Endothelial cell of umbilical vein (primary cell): ENCODE measurements at regions of chr3 and their contacts with region 1.

Region 1: DNA sequence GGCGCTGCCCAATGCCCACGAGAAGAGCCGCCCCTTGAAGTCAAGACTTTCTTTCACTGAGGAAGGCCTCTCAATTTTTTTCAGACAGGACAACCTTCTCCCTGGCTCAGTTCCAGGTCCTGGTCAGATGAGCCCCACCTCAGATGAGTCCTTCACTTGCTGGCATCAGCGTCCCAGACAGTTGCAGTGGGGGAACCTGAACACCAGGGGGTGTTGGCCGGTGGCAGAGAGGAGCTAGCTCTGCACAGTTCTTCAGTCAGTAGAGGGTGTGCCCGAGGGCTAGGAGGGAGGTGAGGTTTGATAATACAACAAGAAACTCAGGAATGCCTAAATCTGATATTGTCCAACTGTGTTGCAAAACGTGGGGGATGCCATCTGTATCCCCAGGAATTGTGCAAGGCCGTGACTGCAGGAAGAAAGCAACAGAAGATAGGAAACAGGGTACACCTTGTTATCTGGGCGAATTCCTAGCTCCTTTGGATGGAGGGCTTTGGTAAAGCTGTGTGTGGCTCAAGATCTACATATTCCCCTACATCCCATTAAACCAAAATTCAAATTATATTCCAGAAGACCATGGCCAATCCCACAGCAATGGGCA is 34.3 kb downstream of the CCR3 start:
- DNase-seq: peak; percentile 48
- H3K4me3 ChIP-seq: no peak overlapping the region
- H3K27ac ChIP-seq: no peak overlapping the region
- H3K4me1 ChIP-seq: no peaks in the 10 kb centered on the region
- H3K27me3 ChIP-seq: no peaks in the 10 kb centered on the region
- CTCF ChIP-seq: peak; percentile 59 to 77
- POLR2A ChIP-seq: no peak

Region 2: GRCh38 chr3:46368569-46368968 is 92.0 kb after region 1 on chr3:
- CTCF ChIA-PET with region 1: interaction called, 45 read pairs
- POLR2A ChIA-PET with region 1: no interaction called
- dilution Hi-C with region 1: no loop called
- intact Hi-C with region 1: no loop called
- DNase-seq: no peak
- H3K4me3 ChIP-seq: no peak overlapping the region
- H3K27ac ChIP-seq: no peak overlapping the region
- H3K4me1 ChIP-seq: no peaks in the 10 kb centered on the region
- H3K27me3 ChIP-seq: peaks cover 9 to 14% of the 10 kb centered on the region in 2 experiments
- CTCF ChIP-seq: no peak
- POLR2A ChIP-seq: no peak

Region 3: GRCh38 chr3:46386206-46386605 is 109.6 kb after region 1 on chr3:
- CTCF ChIA-PET with region 1: interaction called, 11 read pairs
- POLR2A ChIA-PET with region 1: no interaction called
- dilution Hi-C with region 1: no loop called
- intact Hi-C with region 1: no loop called
- DNase-seq: peak; percentile 75
- H3K4me3 ChIP-seq: no peak overlapping the region
- H3K27ac ChIP-seq: no peak overlapping the region
- H3K4me1 ChIP-seq: no peaks in the 10 kb centered on the region
- H3K27me3 ChIP-seq: peaks cover 3 to 8% of the 10 kb centered on the region in 2 experiments
- CTCF ChIP-seq: no peak
- POLR2A ChIP-seq: no peak

Region 4: GRCh38 chr3:46442576-46443562 is 166.3 kb after region 1 on chr3:
- CTCF ChIA-PET with region 1: interaction called, 30 read pairs
- POLR2A ChIA-PET with region 1: no interaction called
- dilution Hi-C with region 1: no loop called
- intact Hi-C with region 1: no loop called
- DNase-seq: no peak
- H3K4me3 ChIP-seq: no peak overlapping the region
- H3K27ac ChIP-seq: no peak overlapping the region
- H3K4me1 ChIP-seq: no peaks in the 10 kb centered on the region
- H3K27me3 ChIP-seq: no peaks in the 10 kb centered on the region
- CTCF ChIP-seq: peak in 1 of 2 donors; percentile 10
- POLR2A ChIP-seq: no peak

Region 5: DNA sequence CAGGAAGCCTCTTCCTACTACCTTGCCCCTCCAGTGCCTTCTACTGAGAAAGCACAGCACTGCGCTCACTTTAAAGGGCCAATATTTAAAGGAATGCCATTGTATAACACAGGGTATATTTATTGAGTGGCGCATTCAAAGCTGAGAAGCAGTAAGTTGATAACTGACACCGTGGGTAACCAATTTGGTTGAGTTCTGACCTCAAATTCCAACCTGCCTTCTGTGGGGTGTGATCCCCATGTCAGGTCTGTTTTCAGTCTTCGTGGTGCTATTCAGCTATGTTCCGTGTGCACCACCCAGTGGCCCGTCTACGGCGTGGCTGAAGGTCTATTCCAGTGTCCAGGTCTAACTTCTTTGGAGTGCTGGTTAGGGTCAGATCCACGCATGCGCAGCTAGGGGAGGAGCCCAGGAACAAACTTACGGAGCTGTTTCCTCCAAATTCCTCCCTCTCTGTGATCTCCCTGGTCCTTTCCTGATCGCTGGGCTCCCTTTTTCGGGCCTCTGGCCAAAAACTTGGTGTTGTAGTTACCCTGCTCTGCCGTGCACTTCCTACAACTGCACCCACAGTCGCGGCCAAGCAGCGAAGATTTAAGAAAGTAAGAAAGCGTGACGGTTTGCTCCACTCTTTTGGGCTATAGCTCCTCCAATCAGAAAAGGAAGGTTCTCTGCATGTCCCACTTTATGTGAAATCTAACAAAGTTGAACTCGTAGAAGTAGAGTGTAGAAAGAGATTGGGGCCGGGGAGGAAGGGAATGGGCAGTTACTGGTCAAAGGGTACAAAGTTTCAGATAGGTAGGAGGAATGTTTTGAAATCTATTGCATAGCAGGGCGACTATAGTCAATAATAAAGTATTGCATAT is 281.8 kb after region 1 on chr3:
- CTCF ChIA-PET with region 1: interaction called, 12 read pairs
- POLR2A ChIA-PET with region 1: no interaction called
- dilution Hi-C with region 1: no loop called
- intact Hi-C with region 1: loop called (anchors 2 kb)
- DNase-seq: peak; percentile 84
- H3K4me3 ChIP-seq: peak overlapping the region; percentile 32 to 71 (median 34)
- H3K27ac ChIP-seq: peak overlapping the region; percentile 6
- H3K4me1 ChIP-seq: peaks cover 23% of the 10 kb centered on the region
- H3K27me3 ChIP-seq: no peaks in the 10 kb centered on the region
- CTCF ChIP-seq: peak; percentile 69 to 85
- POLR2A ChIP-seq: no peak

Region 6: DNA sequence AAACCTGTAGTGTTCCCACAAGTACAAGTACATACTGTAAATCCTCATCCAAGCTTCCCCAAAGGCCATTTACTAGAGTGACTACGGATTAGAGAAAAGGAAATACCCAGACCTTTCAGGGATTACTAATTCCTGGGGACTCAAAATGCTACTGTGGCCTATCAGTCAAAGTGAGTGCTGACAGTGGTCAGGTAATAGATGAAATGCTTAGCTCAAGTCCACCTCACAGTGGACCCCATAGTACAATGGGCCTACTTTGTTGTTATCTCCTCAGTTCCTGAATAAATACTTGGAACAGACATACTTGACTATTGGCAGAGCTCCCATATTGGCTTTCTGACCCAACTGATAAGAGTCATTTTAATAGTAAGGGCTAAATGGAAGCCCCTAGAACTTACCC is 1678.0 kb after region 1 on chr3:
- CTCF ChIA-PET with region 1: no interaction called
- POLR2A ChIA-PET with region 1: no interaction called
- dilution Hi-C with region 1: no loop called
- intact Hi-C with region 1: no loop called
- DNase-seq: peak; percentile 57
- H3K4me3 ChIP-seq: no peak overlapping the region
- H3K27ac ChIP-seq: no peak overlapping the region
- H3K4me1 ChIP-seq: no peaks in the 10 kb centered on the region
- H3K27me3 ChIP-seq: no peaks in the 10 kb centered on the region
- CTCF ChIP-seq: no peak
- POLR2A ChIP-seq: no peak